ENCODE measurements at regions of chr10 and their contacts with region 1.

Region 1: GRCh38 chr10:6514844-6515780 is 65.0 kb downstream of the PRKCQ start:
- DNase-seq: no peak
- ATAC-seq: no peak
- H3K4me3 ChIP-seq: no peak overlapping the region
- H3K4me3 Mint-ChIP-seq: no peak overlapping the region
- H3K27ac ChIP-seq: no peak overlapping the region
- H3K27ac Mint-ChIP-seq: peak overlapping the region; percentile 30 to 67
- H3K4me1 ChIP-seq: peaks cover 22 to 46% of the 10 kb centered on the region in 2 experiments
- H3K4me1 Mint-ChIP-seq: peaks cover 64 to 92% (median 87%) of the 10 kb centered on the region in 3 donors
- H3K27me3 ChIP-seq: no peaks in the 10 kb centered on the region
- H3K27me3 Mint-ChIP-seq: no peaks in the 10 kb centered on the region

Region 2: DNA sequence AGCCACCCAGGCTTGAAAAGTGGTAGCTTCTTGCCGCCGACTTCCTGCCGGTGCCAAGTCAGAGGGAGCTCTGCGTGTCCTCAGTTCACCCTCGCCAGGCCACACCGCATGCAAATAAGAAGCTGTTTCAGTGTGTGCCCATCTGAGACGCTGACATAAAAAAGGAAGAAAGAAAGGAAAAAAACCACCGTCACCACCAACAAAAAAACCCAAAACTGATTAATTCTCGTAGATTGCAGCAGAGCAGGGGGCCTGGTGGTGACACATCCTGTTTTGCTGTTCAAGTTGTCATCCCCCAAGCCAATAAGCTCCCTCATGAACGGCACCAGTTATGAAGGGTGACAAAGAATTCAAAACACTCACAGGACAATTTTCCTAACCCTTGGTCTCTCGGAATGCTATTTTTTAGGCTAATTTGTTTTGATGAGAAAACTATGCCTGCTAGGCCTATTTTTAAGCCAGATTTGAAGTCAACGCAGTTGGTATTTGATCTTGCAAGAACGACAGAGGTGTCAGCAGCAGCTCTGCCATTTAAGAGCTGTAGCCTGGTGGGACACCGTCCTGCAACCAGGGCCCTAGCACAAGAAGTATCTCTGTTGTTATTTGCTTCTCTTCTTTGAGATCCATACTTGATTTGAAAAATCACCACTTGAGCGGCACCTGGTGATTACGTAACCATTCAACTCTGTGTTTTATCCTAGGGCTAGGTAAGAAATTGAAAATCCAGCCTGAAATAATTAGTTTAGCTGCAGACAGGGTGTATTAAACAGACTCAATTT is 166.8 kb before region 1 on chr10:
- CTCF ChIA-PET with region 1: no interaction called
- POLR2A ChIA-PET with region 1: no interaction called
- DNase-seq: peak; percentile 53 to 95 (median 85)
- ATAC-seq: peak; percentile 91 to 94 (median 92)
- H3K4me3 ChIP-seq: peak overlapping the region in 1 of 2 donors; percentile 27
- H3K4me3 Mint-ChIP-seq: peak overlapping the region; percentile 74 to 76 (median 75)
- H3K27ac ChIP-seq: peak overlapping the region; percentile 89
- H3K27ac Mint-ChIP-seq: peak overlapping the region; percentile 97
- H3K4me1 ChIP-seq: peaks cover 21 to 27% of the 10 kb centered on the region in 2 experiments
- H3K4me1 Mint-ChIP-seq: peaks cover 62 to 64% (median 62%) of the 10 kb centered on the region in 3 donors
- H3K27me3 ChIP-seq: no peaks in the 10 kb centered on the region
- H3K27me3 Mint-ChIP-seq: no peaks in the 10 kb centered on the region

Region 3: GRCh38 chr10:6503171-6503570 is 11.9 kb before region 1 on chr10:
- CTCF ChIA-PET with region 1: no interaction called
- POLR2A ChIA-PET with region 1: interaction called in 1 of 2 experiments, 10 read pairs
- DNase-seq: no peak
- ATAC-seq: no peak
- H3K4me3 ChIP-seq: no peak overlapping the region
- H3K4me3 Mint-ChIP-seq: no peak overlapping the region
- H3K27ac ChIP-seq: peak overlapping the region; percentile 44
- H3K27ac Mint-ChIP-seq: peak overlapping the region; percentile 55 to 73
- H3K4me1 ChIP-seq: peaks cover 5 to 36% of the 10 kb centered on the region in 2 experiments
- H3K4me1 Mint-ChIP-seq: peaks cover 64 to 68% (median 65%) of the 10 kb centered on the region in 3 donors
- H3K27me3 ChIP-seq: no peaks in the 10 kb centered on the region
- H3K27me3 Mint-ChIP-seq: no peaks in the 10 kb centered on the region